Breast epithelium (tissue), 4 donors: ENCODE measurements at regions of chr1 and their contacts with region 1.

Region 1: DNA sequence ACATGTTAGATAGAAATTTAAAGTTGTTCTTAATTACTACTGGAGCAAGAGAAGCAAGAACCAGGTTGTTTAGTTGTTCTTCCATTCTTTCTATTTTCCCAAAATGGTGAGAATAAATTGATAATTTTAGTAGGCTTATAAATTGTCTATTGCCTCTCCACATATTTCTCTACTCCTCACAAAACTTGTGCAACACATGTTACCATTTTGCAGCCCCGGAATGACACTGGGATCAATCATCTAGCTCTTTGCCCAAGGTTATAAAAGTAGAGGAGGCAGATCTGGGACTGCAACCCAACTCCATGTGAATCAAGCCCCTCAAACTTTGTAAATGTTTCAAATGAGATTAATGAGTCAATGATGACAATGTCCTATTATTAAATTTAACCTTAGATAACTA is 34.9 kb downstream of the PRMT6 start:
- DNase-seq: no peak
- H3K4me3 ChIP-seq: no peak overlapping the region
- H3K27ac ChIP-seq: no peak overlapping the region
- H3K4me1 ChIP-seq: no peaks in the 10 kb centered on the region
- H3K27me3 ChIP-seq: no peaks in the 10 kb centered on the region
- CTCF ChIP-seq: no peak
- POLR2A ChIP-seq: no peak

Region 2: DNA sequence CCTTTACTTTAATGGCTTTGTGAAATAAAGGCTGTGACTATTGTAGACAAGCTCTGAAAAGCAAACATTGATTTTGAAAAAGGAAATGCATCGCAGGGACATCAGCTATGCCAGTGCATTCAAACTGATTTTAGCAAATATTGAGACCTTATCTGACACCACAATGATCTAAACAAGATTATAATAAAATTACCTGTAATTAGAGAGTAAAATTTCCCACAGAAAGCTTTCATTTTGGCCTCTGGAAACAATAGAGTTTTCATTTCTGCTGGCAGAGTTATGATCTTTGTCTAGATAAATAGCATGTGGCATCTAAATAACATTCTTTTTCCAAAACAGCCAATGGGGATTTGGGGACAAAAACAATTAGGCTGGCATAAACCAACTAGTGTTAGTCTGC is 685.3 kb before region 1 on chr1:
- intact Hi-C with region 1: no loop called
- DNase-seq: no peak
- H3K4me3 ChIP-seq: no peak overlapping the region
- H3K27ac ChIP-seq: no peak overlapping the region
- H3K4me1 ChIP-seq: no peaks in the 10 kb centered on the region
- H3K27me3 ChIP-seq: no peaks in the 10 kb centered on the region
- CTCF ChIP-seq: no peak
- POLR2A ChIP-seq: no peak

Region 3: DNA sequence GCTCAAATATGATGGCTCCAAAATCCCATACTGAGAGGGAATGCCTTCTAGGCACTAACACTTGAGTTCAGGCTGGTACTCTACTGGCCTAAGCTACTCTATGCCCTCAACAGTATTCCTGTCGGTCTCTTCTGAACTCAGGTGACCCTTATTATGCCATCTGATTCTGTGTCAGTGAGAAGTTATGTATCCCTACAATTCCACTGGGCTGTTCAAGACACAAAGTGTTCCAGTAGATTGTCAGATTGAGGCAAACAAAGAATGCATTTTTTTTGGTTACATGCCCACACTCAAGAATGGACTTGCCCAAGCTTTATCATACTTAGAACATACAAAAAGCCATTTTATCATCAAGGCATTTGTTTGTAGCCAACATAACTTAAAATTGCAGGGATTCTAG is 588.8 kb before region 1 on chr1:
- intact Hi-C with region 1: no loop called
- DNase-seq: no peak
- H3K4me3 ChIP-seq: no peak overlapping the region
- H3K27ac ChIP-seq: no peak overlapping the region
- H3K4me1 ChIP-seq: no peaks in the 10 kb centered on the region
- H3K27me3 ChIP-seq: no peaks in the 10 kb centered on the region
- CTCF ChIP-seq: no peak
- POLR2A ChIP-seq: no peak

Region 4: DNA sequence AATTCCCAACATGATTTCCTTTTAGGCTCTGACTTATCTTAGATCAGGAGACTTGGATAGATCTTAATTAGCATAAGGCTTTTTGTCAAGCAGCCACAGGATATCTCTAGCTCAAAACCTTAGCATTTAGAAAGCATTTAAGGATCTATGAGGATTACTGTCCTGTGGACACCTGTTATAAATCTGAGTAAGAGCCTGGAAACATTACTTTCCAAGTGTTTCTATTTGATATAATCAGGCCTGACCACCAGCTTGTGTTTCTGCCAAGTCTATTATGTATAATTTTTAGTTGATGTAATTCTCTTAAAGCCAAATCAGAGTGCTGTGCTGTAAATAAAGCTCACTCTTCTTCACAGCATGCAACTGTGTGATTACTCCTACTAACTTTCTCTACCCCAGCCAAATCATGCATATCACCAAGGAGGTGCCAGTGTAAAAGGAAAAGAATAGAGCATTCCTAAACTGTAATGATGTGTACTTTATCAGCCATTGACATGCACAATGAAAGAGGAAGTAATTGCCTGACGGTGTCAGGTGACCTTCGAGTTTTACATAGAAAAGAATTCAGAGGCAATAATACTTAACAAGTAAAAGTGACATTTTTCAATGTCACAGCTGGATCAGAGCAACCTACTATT is 344.9 kb before region 1 on chr1:
- intact Hi-C with region 1: no loop called
- DNase-seq: no peak
- H3K4me3 ChIP-seq: no peak overlapping the region
- H3K27ac ChIP-seq: no peak overlapping the region
- H3K4me1 ChIP-seq: no peaks in the 10 kb centered on the region
- H3K27me3 ChIP-seq: no peaks in the 10 kb centered on the region
- CTCF ChIP-seq: no peak
- POLR2A ChIP-seq: no peak

Region 5: GRCh38 chr1:107105914-107106313 is 14.5 kb after region 1 on chr1:
- intact Hi-C with region 1: loop called (anchors 2 kb)
- DNase-seq: no peak
- H3K4me3 ChIP-seq: no peak overlapping the region
- H3K27ac ChIP-seq: no peak overlapping the region
- H3K4me1 ChIP-seq: no peaks in the 10 kb centered on the region
- H3K27me3 ChIP-seq: no peaks in the 10 kb centered on the region
- CTCF ChIP-seq: no peak
- POLR2A ChIP-seq: no peak

Region 6: DNA sequence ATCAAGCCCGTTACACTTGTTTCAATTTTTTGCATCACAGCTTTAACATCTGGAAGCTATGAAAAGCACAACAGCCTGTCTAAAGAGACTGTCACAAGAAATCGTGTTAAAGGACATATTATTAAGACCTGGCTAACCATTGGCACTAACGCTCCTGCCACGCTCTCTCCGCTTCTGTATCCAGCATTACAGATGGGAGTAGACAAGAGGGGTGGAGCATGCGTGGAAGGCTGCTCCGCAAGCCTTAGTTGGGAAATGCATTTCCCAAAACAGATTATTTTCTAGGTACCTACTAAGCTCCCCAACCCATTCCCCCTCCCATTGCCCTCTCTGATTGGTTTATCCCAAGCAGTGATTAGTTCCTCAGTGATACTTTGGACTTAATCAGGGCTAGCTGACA is 121.8 kb after region 1 on chr1:
- intact Hi-C with region 1: no loop called
- DNase-seq: no peak
- H3K4me3 ChIP-seq: no peak overlapping the region
- H3K27ac ChIP-seq: no peak overlapping the region
- H3K4me1 ChIP-seq: no peaks in the 10 kb centered on the region
- H3K27me3 ChIP-seq: no peaks in the 10 kb centered on the region
- CTCF ChIP-seq: no peak
- POLR2A ChIP-seq: no peak